ENCODE measurements at regions of chr17 and their contacts with region 1.

Region 1: GRCh38 chr17:75679706-75680442 is 12.7 kb downstream of the SAP30BP start:
- DNase-seq: peak; percentile 91
- ATAC-seq: peak; percentile 77
- H3K4me3 ChIP-seq: 0 out of 2 replicates have a peak overlapping the region, but pooled peaks have one; percentile 34
- H3K27ac ChIP-seq: peak overlapping the region; percentile 39
- H3K4me1 ChIP-seq: peaks cover 57% of the 10 kb centered on the region
- H3K27me3 ChIP-seq: no peaks in the 10 kb centered on the region
- CTCF ChIP-seq: peak; percentile 86

Region 2: GRCh38 chr17:75589012-75589918 is 90.6 kb before region 1 on chr17:
- CTCF ChIA-PET with region 1: no interaction called
- POLR2A ChIA-PET with region 1: no interaction called
- intact Hi-C with region 1: no loop called
- DNase-seq: peak; percentile 94
- ATAC-seq: peak; percentile 94
- H3K4me3 ChIP-seq: peak overlapping the region; percentile 65
- H3K27ac ChIP-seq: no peak overlapping the region
- H3K4me1 ChIP-seq: peaks cover 10% of the 10 kb centered on the region
- H3K27me3 ChIP-seq: no peaks in the 10 kb centered on the region
- CTCF ChIP-seq: peak; percentile 69

Region 3: DNA sequence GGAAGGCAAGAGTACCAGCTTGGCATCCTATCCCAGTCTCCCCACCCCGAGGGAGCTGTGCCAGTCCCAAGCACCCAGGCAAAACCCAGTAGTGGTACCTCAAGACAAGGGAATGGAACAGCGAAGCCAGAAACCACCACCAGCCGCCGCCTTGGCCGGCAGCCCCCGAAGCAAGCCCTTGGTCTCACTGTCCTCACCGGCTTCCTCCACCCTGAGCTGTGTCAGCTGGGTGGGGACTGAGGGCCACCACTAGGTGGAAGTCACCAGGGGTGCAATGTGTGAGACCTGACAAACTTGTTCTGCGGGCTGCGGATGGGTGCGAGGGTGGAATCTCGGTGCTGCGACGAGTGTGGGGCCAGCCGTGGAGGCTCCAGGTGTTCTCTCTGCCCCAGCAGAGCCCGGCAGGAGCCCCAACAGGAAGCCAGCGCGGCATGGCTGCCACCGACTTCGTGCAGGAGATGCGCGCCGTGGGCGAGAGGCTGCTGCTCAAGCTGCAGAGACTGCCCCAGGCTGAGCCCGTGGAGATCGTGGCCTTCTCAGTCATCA is 40.0 kb before region 1 on chr17:
- CTCF ChIA-PET with region 1: no interaction called
- POLR2A ChIA-PET with region 1: no interaction called
- intact Hi-C with region 1: no loop called
- DNase-seq: peak; percentile 63
- ATAC-seq: 0 out of 2 replicates have a peak, but pooled peaks have one; percentile 17
- H3K4me3 ChIP-seq: no peak overlapping the region
- H3K27ac ChIP-seq: peak overlapping the region; percentile 28
- H3K4me1 ChIP-seq: peaks cover 29% of the 10 kb centered on the region
- H3K27me3 ChIP-seq: no peaks in the 10 kb centered on the region
- CTCF ChIP-seq: peak; percentile 47

Region 4: DNA sequence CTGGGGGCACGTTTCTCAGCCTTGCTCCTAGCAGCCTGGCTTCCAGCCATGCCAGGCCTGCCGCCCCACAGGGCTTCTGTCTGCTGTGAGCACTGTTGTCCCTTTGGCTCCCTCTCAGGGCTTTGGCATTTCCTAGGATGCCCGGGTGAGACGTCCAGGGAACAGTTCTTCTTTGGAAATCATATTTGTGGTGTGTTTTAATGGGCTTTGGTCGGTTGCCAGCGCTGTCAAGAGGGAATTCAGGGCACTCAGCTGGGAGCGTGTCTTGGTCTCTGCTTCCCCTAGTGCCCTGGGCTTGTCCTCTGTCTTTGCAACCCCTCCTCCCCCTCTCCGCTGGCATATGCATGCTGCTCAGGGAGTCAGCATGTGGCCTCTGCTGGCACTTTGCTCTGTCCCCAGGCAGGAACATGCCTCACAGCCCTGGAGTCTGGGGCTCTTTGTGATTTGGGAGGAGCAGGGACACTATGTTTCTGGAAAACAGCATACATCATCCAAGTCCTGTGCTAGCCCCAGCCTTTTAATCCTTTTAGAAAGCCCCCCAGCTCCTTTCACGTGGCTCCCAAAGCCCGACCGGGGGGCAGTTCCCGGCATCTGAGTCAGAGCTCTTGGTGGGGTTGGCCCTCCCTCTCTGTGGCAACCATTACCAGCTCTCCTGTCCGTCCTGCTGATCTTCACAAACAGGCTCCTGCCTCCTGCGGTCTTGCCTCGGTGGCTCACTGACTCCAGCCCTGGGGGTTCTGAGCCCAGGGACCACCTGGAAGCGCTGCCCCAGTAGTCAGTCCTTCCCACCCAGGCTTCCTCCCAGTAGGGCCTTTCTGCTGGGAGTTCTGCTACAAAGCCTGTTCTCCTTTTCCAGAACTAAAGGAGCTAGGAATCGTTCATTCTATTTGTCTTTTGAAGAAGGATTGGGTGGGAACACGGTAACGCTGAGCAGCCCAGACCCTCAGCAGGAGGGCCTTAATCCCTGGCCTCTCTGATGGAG is 13.9 kb after region 1 on chr17:
- CTCF ChIA-PET with region 1: interaction called, 14 read pairs
- POLR2A ChIA-PET with region 1: interaction called, 4 read pairs
- intact Hi-C with region 1: loop called (anchors 1 kb)
- DNase-seq: peak; percentile 99
- ATAC-seq: peak; percentile 77
- H3K4me3 ChIP-seq: no peak overlapping the region
- H3K27ac ChIP-seq: peak overlapping the region; percentile 86
- H3K4me1 ChIP-seq: peaks cover 88% of the 10 kb centered on the region
- H3K27me3 ChIP-seq: no peaks in the 10 kb centered on the region
- CTCF ChIP-seq: peak; percentile 38; the same call in 1 of the 2 replicates

Region 5: GRCh38 chr17:75707131-75707571 is 27.3 kb after region 1 on chr17:
- CTCF ChIA-PET with region 1: interaction called, 7 read pairs
- POLR2A ChIA-PET with region 1: interaction called, 3 read pairs
- intact Hi-C with region 1: loop called (anchors 1 kb)
- DNase-seq: peak; percentile 94
- ATAC-seq: peak; percentile 99
- H3K4me3 ChIP-seq: peak overlapping the region; percentile 16; the same call in 1 of the 2 replicates
- H3K27ac ChIP-seq: peak overlapping the region; percentile 68
- H3K4me1 ChIP-seq: peaks cover 34% of the 10 kb centered on the region
- H3K27me3 ChIP-seq: no peaks in the 10 kb centered on the region
- CTCF ChIP-seq: no peak

Region 6: DNA sequence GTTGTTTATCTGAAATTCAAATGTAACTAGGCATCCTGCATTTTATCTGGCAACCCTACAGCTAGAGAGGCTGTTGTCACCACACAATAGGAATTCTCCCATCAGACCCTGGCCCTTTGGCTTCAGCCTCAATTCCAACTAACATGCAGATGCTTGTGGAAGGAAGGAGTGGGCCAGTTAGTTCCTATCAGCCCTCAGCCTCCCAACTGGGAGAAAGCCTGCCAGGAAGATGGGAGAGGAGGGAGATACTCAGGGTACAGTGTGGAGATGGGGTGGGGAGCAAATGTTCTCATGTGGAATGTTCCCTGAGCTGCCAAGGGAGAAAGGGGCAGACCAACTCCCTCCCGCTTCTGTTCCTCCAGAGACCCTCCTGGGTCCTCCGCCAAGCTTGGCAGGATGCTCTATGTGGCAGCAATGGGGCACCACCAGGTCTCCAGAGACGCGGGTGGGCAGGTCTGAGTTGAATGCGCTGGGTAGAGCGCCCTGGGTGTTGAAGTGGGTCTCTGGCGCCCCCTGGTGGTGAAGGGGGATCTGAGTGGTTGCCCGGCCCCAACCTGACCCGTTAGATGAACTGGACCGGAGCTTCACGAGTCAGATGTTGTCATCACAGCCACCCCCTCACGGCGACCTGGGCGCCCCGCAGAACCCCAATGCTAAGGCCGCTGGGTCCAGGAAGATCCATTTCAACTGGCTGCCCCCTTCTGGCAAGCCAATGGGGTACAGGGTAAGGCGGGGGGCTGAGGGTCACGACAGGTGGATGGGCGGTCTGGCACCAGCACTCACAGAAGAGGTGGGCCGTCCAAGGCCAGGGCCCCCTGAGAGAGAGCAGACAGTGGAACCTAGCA is 69.9 kb after region 1 on chr17:
- CTCF ChIA-PET with region 1: interaction called, 42 read pairs
- POLR2A ChIA-PET with region 1: no interaction called
- intact Hi-C with region 1: loop called (anchors 1 kb)
- DNase-seq: peak; percentile 79
- ATAC-seq: peak; percentile 78
- H3K4me3 ChIP-seq: no peak overlapping the region
- H3K27ac ChIP-seq: no peak overlapping the region
- H3K4me1 ChIP-seq: no peaks in the 10 kb centered on the region
- H3K27me3 ChIP-seq: no peaks in the 10 kb centered on the region
- CTCF ChIP-seq: peak; percentile 98